Activated CD4-positive, alpha-beta memory T cell treated with anti-CD3 and anti-CD28 coated beads, Interleukin-2, amount 10 ng/mL, durations not matched to agents 7 days and 5 days (primary cell): ENCODE measurements at regions of chr17 and their contacts with region 1.

Region 1: DNA sequence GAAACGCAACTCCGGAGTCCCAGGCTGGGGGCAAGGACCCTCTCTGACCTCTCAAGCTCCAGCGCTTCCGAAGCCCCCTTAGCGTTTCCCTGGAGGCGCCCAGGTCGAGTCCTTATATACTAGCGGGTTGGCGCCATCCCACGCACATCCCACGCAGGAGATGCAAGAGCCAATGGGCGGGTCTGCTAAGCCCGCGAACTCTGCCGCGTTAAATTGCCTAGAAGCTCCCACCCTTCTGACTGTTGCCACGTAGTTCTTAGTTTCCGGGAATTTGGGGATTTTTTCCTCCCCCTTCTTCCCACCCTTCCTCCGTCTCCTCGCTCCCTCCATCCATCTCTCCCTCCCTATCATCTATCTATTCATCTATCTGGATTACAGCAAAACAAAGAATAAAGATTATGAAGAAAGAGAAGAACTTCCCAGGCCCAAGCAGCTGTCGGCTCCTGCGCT is at the start of gene SLFN11:
- DNase-seq: peak; percentile 85
- H3K4me3 Mint-ChIP-seq: peak within 1 kb of the TSS; percentile 97
- H3K27ac Mint-ChIP-seq: peak within 1 kb of the TSS; percentile 96
- H3K4me1 Mint-ChIP-seq: peaks cover 56% of the 10 kb centered on the region
- H3K27me3 Mint-ChIP-seq: no peaks in the 10 kb centered on the region
- total RNA-seq, gene SLFN11: 67.5 to 72.6 TPM

Region 2: DNA sequence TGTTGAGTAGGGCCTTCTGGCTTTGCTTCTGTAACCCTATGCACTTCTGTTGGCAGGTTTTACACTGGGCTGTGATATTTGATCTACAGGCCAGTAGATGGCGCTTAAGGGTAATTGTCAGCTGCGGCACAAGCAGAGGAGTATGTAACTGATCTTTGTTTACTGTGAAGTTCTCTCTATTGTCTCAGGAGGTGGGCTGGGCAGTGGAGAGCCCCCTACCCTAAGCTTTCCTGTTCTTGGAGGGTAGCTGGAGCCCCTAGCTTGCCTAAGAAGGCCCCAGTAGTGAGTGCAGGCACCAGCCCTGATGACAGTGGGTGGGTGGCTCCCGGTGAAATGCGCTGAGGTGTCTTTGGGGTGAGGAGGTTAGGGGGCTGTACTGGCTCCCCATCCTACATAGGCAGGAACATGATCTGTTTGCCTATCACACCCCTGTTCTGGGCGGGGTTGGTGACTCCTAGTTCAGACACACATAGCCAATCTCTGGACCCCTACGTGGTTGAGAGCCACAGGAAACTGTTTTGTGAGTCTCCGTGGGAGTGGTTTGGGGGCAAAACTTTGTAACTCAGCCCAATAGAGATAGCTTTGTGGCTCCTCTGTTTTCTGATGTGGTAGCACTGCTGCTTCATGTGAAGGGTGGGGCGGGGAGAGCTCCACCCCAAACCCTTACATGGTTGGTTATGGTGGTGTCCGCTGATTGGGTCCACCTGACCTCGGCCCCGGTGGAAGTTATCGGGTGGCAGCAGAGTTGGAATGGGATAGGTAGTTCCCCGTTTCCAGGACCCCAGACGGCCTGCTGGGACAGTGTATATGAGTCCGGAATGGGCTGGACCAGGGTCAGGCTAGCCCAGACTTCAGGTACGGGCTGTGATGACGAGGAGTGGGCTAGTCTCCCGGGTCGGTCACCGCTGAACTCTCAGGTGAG is 60.5 kb before region 1 on chr17:
- CTCF ChIA-PET with region 1: interaction called, 19 read pairs
- POLR2A ChIA-PET with region 1: interaction called, 45 read pairs
- DNase-seq: peak; percentile 84
- H3K4me3 Mint-ChIP-seq: peak overlapping the region; percentile 83
- H3K27ac Mint-ChIP-seq: peak overlapping the region; percentile 90
- H3K4me1 Mint-ChIP-seq: peaks cover 42% of the 10 kb centered on the region
- H3K27me3 Mint-ChIP-seq: peaks cover 3% of the 10 kb centered on the region

Region 3: GRCh38 chr17:35345926-35346771 is 27.4 kb before region 1 on chr17:
- CTCF ChIA-PET with region 1: interaction called, 6 read pairs
- POLR2A ChIA-PET with region 1: interaction called, 16 read pairs
- DNase-seq: peak; percentile 46
- H3K4me3 Mint-ChIP-seq: peak overlapping the region; percentile 81
- H3K27ac Mint-ChIP-seq: peak overlapping the region; percentile 80
- H3K4me1 Mint-ChIP-seq: peaks cover 68% of the 10 kb centered on the region
- H3K27me3 Mint-ChIP-seq: peaks cover 8% of the 10 kb centered on the region

Region 4: DNA sequence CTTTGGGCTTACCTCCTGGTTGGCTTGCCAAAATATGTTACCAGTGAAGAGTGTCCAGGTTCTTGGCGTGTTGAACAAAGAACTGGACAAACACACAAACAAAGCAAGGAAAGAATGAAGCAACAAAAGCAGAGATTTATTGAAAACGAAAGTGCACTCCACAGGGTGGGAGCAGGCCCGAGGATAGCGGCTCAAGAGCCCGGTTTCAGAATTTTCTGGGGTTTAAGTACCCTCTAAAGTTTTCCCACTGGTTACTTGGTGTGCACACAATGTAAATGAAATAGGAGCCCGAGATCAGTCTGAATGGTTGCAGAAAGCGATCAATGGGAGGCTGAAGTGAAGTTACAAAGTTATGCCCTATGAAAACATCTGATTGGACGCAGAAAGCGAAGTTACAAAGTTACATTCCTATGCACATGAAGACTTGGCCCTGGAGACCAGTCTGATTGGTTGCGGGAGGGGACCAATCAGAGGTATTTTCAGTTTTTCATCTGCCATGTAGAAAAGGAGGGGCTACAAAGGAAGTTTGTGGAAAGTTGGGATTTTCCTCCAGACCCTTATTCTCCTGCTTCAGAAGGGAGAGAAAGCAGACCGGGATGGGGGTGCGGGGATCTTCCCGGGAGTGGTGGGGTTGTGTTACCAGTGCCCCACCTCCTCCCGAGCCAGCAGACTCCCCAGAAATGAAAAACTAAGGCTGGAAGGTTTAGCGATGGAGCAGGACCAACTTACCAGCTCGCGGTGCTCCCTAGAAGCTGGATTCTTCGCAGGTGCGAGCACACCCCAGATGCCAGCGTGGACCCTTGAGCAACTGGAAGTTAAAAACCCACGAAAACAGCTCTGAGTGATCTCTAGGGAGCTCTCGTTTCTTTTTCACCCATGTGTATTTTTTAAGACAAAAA is 58.9 kb after region 1 on chr17 and contains the start of gene SLFN12:
- CTCF ChIA-PET with region 1: interaction called, 3 read pairs
- POLR2A ChIA-PET with region 1: interaction called, 19 read pairs
- DNase-seq: peak; percentile 59
- H3K4me3 Mint-ChIP-seq: peak within 1 kb of the TSS; percentile 96
- H3K27ac Mint-ChIP-seq: peak within 1 kb of the TSS; percentile 91
- H3K4me1 Mint-ChIP-seq: peaks cover 64% of the 10 kb centered on the region
- H3K27me3 Mint-ChIP-seq: no peaks in the 10 kb centered on the region
- total RNA-seq, gene SLFN12: 22.7 to 23.1 TPM

Region 5: GRCh38 chr17:35448214-35448898 is 74.8 kb after region 1 on chr17 and contains the start of gene SLFN13:
- CTCF ChIA-PET with region 1: interaction called, 4 read pairs
- POLR2A ChIA-PET with region 1: interaction called, 14 read pairs
- DNase-seq: peak; percentile 91
- H3K4me3 Mint-ChIP-seq: peak within 1 kb of the TSS; percentile 70
- H3K27ac Mint-ChIP-seq: peak within 1 kb of the TSS; percentile 72
- H3K4me1 Mint-ChIP-seq: peaks cover 25% of the 10 kb centered on the region
- H3K27me3 Mint-ChIP-seq: no peaks in the 10 kb centered on the region
- total RNA-seq, gene SLFN13: 82.6 to 96.7 TPM

Region 6: DNA sequence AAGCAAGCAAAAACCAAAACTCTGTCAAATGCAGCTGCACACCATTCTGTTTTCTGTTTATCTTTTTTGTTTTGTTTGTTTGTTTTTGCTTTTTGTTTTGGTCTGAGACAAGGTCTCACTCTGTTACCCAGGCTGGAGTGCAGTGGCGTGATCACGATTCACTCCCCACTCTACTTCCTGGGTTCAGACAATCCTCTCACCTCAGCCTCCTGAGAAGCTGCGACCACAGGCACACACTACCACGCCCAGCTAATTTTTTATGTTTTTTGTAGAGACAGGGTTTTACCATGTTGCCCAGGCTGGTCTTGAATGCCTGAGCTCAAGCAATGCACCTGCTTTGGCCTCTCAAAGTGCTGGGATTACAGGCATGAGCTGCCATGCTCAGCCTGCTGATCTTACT is 94.3 kb after region 1 on chr17:
- CTCF ChIA-PET with region 1: no interaction called
- POLR2A ChIA-PET with region 1: interaction called, 11 read pairs
- DNase-seq: peak; percentile 64
- H3K4me3 Mint-ChIP-seq: no peak overlapping the region
- H3K27ac Mint-ChIP-seq: peak overlapping the region; percentile 58
- H3K4me1 Mint-ChIP-seq: peaks cover 52% of the 10 kb centered on the region
- H3K27me3 Mint-ChIP-seq: no peaks in the 10 kb centered on the region

Region 7: GRCh38 chr17:35486920-35487732 is 113.6 kb after region 1 on chr17:
- CTCF ChIA-PET with region 1: interaction called, 3 read pairs
- POLR2A ChIA-PET with region 1: interaction called, 32 read pairs
- DNase-seq: peak; percentile 76
- H3K4me3 Mint-ChIP-seq: peak overlapping the region; percentile 81
- H3K27ac Mint-ChIP-seq: peak overlapping the region; percentile 85
- H3K4me1 Mint-ChIP-seq: peaks cover 65% of the 10 kb centered on the region
- H3K27me3 Mint-ChIP-seq: no peaks in the 10 kb centered on the region